MCF 10A (cell line): ENCODE measurements at regions of chr11 and their contacts with region 1.

Region 1: GRCh38 chr11:70220920-70221319 is 17.8 kb downstream of the FADD start:
- DNase-seq: no peak
- H3K4me3 Mint-ChIP-seq: no peak overlapping the region
- H3K27ac Mint-ChIP-seq: no peak overlapping the region
- H3K4me1 Mint-ChIP-seq: peaks cover 5% of the 10 kb centered on the region
- H3K27me3 Mint-ChIP-seq: no peaks in the 10 kb centered on the region
- CTCF ChIP-seq: no peak

Region 2: DNA sequence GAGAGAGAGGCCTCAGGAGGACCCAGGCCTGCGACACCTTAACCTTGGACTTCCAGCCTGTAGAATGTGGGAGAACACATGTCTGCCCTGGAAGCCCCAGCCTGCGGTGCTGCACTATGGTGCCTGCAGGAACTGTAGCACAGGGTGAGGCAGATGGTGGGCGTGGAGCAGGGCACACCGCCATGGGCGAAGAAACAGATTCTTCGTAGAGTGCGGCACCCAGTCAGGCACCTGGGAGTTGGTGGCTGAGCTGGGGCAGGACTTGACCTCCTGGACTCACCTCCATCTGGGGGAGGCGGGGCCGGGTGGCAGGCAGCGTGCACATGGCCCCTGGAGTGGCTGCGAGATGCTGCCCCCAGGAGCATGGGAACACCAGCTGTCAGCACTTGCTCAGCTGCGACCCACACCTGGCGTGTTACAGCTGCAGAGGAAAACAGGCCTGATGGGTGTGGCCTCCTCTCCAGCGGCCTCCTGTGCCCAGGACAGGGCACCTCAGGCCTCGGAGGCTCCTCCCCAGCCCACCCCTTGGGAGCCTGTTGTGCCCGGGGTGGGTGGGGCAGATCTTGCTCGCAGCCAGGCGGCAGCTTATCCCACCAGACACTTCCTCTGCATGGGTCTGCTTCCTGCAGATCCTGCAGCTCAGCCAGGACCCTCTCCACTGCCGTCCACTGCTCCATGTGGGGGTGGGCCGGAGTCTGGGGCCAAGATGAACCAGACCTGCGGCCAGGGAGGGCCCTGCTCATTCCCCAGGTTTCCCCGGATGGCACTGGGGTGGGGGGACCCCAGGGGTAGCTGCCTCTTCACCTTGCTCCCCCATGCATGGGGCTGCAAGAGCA is 846.6 kb before region 1 on chr11:
- CTCF ChIA-PET with region 1: no interaction called
- POLR2A ChIA-PET with region 1: no interaction called
- intact Hi-C with region 1: no loop called
- DNase-seq: no peak
- H3K4me3 Mint-ChIP-seq: no peak overlapping the region
- H3K27ac Mint-ChIP-seq: no peak overlapping the region
- H3K4me1 Mint-ChIP-seq: no peaks in the 10 kb centered on the region
- H3K27me3 Mint-ChIP-seq: no peaks in the 10 kb centered on the region
- CTCF ChIP-seq: no peak

Region 3: DNA sequence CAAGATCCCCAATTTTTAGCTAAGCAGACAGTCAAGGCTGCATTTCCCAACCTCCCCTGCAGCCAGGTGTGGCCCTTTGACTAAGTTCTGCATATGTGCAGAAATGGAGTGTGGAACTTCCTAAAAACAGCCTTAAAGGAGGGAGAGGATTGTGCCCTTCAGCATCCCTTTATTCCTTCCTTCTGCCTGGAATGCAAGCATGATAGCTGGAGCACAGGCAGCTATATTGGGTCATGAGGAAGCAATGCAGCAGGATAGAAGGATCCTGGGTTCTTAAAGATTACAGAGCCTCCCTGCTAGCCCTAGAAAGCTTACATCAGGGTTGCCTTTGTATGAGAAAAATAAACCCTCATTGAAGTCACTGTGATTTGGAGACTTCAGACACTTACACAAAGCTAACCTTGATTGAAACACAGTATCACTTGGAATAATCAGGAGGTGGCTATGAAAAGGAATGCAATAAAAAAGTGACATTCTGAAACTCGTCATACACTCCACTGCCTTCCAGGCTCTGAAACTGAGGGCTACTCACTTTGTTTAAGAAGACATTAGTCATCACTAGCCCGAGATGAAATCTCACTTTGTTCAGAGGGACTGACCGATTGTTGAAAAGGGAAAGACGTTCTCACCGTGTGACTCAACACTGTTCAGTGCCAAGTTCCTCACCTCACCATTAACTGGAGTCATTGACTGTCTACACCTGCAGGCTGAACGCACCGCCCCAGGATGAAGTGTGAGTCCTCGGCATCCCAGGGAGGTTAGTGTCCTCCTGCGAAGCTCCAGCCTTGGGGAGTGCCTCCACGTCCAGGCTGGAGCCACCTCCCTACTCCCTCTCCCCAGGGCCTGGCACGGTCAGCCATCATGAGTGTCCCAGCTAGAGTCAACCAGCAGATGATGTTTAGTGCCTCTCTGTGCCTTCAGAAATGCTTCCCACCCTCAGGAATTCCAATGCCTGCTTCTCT is 12.4 kb after region 1 on chr11:
- CTCF ChIA-PET with region 1: interaction called, 3 read pairs
- POLR2A ChIA-PET with region 1: interaction called, 12 read pairs
- intact Hi-C with region 1: no loop called
- DNase-seq: peak; percentile 99
- H3K4me3 Mint-ChIP-seq: peak overlapping the region; percentile 44
- H3K27ac Mint-ChIP-seq: peak overlapping the region; percentile 85
- H3K4me1 Mint-ChIP-seq: peaks cover 16% of the 10 kb centered on the region
- H3K27me3 Mint-ChIP-seq: no peaks in the 10 kb centered on the region
- CTCF ChIP-seq: no peak